ENCODE measurements at regions of chr10 and their contacts with region 1.

Region 1: DNA sequence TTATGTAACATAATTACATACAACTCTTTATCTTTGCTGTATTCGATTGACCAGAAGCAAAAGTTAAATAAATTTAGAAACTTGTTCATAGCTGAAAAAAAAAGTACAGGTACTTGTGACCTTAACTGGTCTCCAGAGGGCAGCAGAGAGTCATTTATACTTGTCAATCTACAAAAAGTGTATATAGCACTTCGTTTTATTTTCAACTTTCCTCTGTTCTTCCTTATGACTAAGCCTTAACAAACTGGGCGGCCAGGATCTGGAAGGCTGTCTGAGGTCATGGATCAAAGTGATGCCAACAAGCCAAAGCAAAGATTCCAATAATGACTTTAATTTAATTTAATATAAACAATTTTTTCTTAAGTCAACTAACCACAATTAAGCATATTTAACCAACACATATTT is 29.8 kb downstream of the C10orf67 start:
- DNase-seq: peak; percentile 49
- ATAC-seq: no peak
- H3K4me3 Mint-ChIP-seq: no peak overlapping the region
- H3K27ac Mint-ChIP-seq: no peak overlapping the region
- H3K4me1 Mint-ChIP-seq: no peaks in the 10 kb centered on the region
- H3K27me3 Mint-ChIP-seq: peaks cover 12% of the 10 kb centered on the region

Region 2: DNA sequence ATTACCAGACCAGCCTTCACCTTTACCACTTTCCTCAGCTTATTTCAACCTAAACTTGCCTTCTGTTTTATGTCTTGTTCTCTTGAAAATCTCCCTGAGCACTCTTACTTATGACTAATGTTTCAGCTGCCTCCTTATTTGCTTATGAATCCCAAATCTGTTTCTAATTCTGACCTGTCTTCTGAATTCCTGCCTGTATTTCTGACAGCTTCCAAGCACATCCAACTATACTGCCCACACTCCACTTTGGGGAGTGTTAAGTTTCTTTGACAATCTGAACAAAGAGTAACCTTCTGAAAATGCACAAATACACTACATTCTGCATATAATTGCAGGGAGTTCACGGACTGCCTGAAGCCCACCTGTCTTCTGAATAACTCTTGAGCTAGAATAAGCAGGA is 338.3 kb before region 1 on chr10:
- CTCF ChIA-PET with region 1: no interaction called
- DNase-seq: no peak
- ATAC-seq: no peak
- H3K4me3 Mint-ChIP-seq: no peak overlapping the region
- H3K27ac Mint-ChIP-seq: no peak overlapping the region
- H3K4me1 Mint-ChIP-seq: no peaks in the 10 kb centered on the region
- H3K27me3 Mint-ChIP-seq: peaks cover 11% of the 10 kb centered on the region

Region 3: DNA sequence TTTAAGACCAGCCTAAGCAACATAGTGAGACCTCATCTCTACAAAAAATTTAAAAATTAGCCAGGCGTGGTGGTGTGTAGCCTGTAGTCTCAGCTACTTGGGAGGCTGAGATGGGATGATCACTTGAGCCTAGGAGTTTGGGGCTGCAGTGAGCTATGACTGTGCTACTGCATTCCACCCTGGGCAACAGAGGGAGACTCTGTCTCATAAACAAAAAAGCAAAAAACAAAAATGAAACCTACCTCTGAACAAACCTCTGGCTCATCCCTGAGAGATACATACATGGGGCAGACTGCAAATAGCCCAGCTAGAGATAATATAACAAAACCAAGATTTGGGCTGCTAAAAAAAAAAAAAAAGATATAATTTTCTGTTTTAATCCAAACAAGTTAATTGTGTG is 10.3 kb after region 1 on chr10:
- CTCF ChIA-PET with region 1: interaction called, 12 read pairs
- DNase-seq: no peak
- ATAC-seq: peak; percentile 70
- H3K4me3 Mint-ChIP-seq: no peak overlapping the region
- H3K27ac Mint-ChIP-seq: no peak overlapping the region
- H3K4me1 Mint-ChIP-seq: peaks cover 2% of the 10 kb centered on the region
- H3K27me3 Mint-ChIP-seq: peaks cover 33% of the 10 kb centered on the region

Region 4: GRCh38 chr10:23525406-23525805 is 210.6 kb after region 1 on chr10:
- CTCF ChIA-PET with region 1: interaction called, 39 read pairs
- DNase-seq: no peak
- ATAC-seq: no peak
- H3K4me3 Mint-ChIP-seq: no peak overlapping the region
- H3K27ac Mint-ChIP-seq: no peak overlapping the region
- H3K4me1 Mint-ChIP-seq: no peaks in the 10 kb centered on the region
- H3K27me3 Mint-ChIP-seq: peaks cover 23% of the 10 kb centered on the region

Region 5: GRCh38 chr10:23533212-23533611 is 218.4 kb after region 1 on chr10:
- CTCF ChIA-PET with region 1: interaction called, 39 read pairs
- DNase-seq: no peak
- ATAC-seq: no peak
- H3K4me3 Mint-ChIP-seq: no peak overlapping the region
- H3K27ac Mint-ChIP-seq: no peak overlapping the region
- H3K4me1 Mint-ChIP-seq: no peaks in the 10 kb centered on the region
- H3K27me3 Mint-ChIP-seq: peaks cover 6% of the 10 kb centered on the region

Measured in activated CD8-positive, alpha-beta memory T cell treated with anti-CD3 and anti-CD28 coated beads, Interleukin-2, amount 10 ng/mL, durations not matched to agents 7 days and 5 days (primary cell).